GM18951 (cell line): ENCODE measurements at regions of chr11 and their contacts with region 1.

Region 1: DNA sequence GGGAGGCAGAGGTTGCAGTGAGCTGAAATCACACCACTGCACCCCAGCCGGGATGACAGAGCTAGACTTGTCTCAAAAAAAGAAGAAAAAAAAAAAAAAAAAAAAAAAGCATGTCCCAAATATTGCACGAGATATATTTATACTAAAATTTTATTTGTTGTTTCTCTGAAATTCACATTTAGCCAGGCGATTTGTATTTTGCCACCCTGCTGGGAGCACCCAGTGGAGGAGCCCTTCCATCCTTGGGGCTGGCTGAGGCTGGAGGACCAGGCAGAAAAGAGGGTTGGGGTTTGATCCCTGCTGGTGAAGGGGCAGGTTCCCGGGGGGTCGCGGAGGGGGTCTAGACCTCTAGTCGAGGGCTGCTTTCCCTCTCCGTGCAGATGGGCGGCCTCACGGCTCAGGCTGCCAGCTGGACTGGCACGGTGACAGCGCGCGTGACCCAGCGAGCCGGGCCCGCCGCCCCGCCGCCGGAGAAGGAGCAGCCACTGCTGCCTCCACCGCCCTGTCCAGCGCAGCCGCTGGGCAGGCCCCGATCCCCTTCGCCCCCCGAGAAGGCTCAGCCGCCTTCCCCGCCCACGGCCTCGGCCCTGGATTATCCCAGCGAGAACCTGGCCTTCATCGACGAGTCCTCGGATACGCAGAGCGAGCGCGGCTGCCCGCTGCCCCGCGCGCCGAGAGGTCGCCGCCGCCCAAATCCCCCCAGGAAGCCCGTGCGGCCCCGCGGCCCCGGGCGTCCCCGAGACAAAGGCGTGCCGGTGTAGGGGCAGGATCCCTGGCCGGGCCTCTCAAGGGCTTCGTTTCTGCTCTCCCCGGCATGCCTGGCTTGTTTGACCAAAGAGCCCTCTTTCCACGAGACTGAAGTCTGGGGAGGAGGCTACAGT is 952 bp upstream of the CATSPERZ start:
- POLR2A ChIP-seq: no peak

Region 2: DNA sequence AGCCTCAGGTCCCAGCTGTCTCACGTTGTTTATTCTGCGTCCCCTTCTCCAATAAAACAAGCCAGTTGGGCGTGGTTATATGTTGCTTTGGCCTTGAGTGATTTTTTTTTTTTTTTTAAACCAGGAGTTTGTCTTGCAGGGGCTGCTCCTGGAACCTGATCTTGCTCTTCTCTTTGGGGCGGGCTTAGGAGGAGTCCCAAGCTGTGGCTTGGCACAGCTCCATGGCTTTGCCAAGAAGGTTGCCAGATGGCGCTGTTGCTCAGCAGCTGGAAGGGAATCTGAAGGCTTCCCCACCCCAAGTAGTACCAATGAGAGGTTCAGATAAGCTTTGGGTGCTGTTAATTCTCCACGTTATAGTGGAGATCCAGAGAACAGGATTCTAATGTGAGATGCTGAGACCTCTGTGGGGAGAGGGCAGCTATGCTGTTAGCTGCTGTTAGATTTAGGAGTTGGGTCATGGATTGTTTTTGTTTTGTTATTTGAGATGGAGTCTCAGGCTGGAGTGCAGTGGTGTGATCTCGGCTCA is 94.7 kb before region 1 on chr11:
- in situ Hi-C with region 1: loop called (anchors 5 kb)
- POLR2A ChIP-seq: no peak

Region 3: DNA sequence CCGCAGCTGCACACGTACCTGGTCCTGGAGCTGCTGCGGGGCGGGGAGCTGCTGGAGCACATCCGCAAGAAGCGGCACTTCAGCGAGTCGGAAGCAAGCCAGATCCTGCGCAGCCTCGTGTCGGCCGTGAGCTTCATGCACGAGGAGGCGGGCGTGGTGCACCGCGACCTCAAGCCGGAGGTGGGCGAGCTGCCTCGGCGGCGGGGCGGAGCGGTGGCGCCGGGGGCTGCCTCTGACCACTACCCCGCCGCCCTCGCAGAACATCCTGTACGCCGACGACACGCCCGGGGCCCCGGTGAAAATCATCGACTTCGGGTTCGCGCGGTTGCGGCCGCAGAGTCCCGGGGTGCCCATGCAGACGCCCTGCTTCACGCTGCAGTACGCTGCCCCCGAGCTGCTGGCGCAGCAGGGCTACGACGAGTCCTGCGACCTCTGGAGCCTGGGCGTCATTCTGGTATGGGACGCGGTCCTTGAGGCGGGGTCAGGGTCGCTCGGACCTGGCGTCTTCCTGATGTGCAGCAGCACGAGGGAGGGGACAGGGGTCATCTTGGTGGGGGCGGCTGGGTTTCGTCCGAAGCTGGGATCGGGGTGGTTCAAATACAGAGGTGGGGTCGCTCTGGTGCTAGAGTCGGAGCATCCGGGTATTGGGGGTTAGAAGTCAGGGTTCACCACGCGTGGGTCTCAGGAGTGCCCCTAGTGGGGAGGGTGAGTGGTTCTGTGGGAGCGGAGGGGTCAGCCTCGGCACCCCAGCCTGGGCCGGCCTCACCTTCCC is 70.4 kb after region 1 on chr11:
- in situ Hi-C with region 1: no loop called
- POLR2A ChIP-seq: no peak

Region 4: DNA sequence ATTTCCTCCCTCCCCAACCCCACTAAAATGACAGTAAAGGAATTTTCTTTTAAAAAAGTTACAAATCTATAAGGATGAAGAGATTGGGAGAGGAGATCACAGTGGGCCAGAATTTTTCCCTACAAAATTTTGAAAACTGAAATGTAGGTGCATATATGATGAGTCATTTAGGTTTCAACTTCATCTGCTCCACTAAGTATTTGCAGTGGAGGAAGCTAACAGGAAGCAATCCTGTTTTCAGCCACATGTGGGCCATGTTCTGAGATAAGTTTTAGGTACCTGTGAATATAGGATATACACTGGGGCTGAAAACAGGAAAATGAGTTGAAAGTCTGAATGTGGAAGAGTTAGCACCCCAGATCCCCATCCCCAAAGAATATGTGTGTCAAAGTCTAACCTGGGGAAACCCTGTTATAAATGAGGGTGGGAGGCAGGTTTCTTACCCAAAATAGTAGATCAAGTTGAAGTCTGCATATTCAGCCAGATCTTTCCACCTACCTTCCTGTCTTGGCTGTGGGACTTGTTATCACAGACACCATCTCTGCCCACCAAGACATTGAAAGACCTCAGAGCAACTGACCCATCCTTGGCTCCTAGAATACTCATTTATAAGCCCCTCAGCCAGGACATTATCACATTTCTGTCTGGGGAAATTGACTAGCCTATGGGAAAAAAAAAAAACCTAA is 1858.1 kb after region 1 on chr11:
- in situ Hi-C with region 1: no loop called
- POLR2A ChIP-seq: no peak